MCF 10A (cell line): ENCODE measurements at regions of chr3 and their contacts with region 1.

Region 1: GRCh38 chr3:176848431-176849214 is 348.7 kb downstream of the TBL1XR1 start:
- DNase-seq: peak; percentile 75
- H3K4me3 Mint-ChIP-seq: no peak overlapping the region
- H3K27ac Mint-ChIP-seq: no peak overlapping the region
- H3K4me1 Mint-ChIP-seq: no peaks in the 10 kb centered on the region
- H3K27me3 Mint-ChIP-seq: no peaks in the 10 kb centered on the region
- CTCF ChIP-seq: no peak

Region 2: GRCh38 chr3:176872771-176873209 is 24.2 kb after region 1 on chr3:
- CTCF ChIA-PET with region 1: interaction called, 3 read pairs
- POLR2A ChIA-PET with region 1: interaction called, 10 read pairs
- intact Hi-C with region 1: no loop called
- DNase-seq: peak; percentile 70
- H3K4me3 Mint-ChIP-seq: no peak overlapping the region
- H3K27ac Mint-ChIP-seq: peak overlapping the region; percentile 16
- H3K4me1 Mint-ChIP-seq: peaks cover 18% of the 10 kb centered on the region
- H3K27me3 Mint-ChIP-seq: no peaks in the 10 kb centered on the region
- CTCF ChIP-seq: peak; percentile 64

Region 3: GRCh38 chr3:176906046-176906905 is 57.7 kb after region 1 on chr3:
- CTCF ChIA-PET with region 1: no interaction called
- POLR2A ChIA-PET with region 1: no interaction called
- intact Hi-C with region 1: no loop called
- DNase-seq: peak; percentile 93
- H3K4me3 Mint-ChIP-seq: no peak overlapping the region
- H3K27ac Mint-ChIP-seq: no peak overlapping the region
- H3K4me1 Mint-ChIP-seq: no peaks in the 10 kb centered on the region
- H3K27me3 Mint-ChIP-seq: no peaks in the 10 kb centered on the region
- CTCF ChIP-seq: no peak